Head of caudate nucleus (tissue), 42 donors: ENCODE measurements at regions of chr1 and their contacts with region 1.

Region 1: GRCh38 chr1:177355595-177355994 is 184.8 kb downstream of the BRINP2 start:
- DNase-seq: peak in 36 of 42 donors; percentile 9 to 86 (median 52)

Region 2: GRCh38 chr1:177256153-177257075 is 99.2 kb before region 1 on chr1:
- intact Hi-C with region 1: loop called (anchors 2 kb)
- DNase-seq: peak; percentile 18 to 94 (median 79)